ENCODE measurements at regions of chr1 and their contacts with region 1.

Region 1: GRCh38 chr1:119323216-119323982 is 45.2 kb upstream of the HAO2 start:
- DNase-seq: peak; percentile 68
- CTCF ChIP-seq: no peak

Region 2: GRCh38 chr1:118659640-118660039 is 663.8 kb before region 1 on chr1:
- in situ Hi-C with region 1: no loop called
- DNase-seq: no peak
- CTCF ChIP-seq: no peak

Region 3: DNA sequence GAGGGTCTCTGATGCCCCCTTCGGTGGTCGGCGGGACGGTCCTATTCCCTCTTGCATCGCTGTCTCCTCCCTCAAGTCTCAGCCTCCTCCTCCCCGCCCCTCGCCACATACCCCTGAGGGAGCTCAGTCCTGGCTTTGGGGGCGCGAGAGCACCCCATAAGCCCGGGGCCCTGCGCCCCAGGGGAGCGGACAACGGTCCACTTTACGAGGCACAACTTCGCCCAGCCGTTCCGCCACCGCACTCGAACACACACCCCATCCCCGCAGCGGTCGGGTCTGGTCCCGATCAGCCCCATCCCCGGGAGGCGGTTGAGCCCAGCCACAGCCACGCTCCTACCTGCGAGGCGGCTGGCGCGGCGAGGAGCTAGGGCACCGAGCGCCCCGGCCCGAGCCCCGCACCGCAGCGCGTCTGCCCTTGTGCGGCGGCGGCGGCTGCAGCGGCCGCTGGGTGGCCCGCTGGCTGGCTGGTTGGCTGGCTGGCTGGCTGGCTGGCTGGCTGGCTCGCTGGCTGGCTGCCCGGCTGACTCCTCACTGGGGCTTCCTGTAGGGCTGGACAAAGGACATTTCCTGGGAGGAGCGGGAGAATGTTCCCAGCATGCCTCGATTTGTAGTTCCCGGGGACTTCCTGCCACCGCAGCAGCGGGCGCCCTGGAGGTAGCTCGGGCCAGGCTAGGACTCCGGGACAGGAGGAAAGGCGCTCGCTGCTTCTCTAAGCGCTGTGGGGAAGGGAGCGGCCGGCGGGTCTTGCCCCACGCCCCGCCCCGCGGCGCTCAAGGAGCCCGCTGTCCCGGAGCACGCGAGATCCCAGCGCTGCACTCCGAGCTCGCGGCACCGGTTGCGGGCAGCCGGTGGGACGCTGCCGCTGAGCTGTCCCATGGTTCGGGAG is 324.6 kb after region 1 on chr1 and contains the start of gene ZNF697:
- in situ Hi-C with region 1: loop called (anchors 25 kb)
- DNase-seq: peak; percentile 85
- CTCF ChIP-seq: peak; percentile 8